ENCODE measurements at regions of chrX and their contacts with region 1.

Region 1: GRCh38 chrX:138128027-138128671 is 562.2 kb downstream of the ZIC3 start:
- DNase-seq: peak; percentile 20
- ATAC-seq: peak; percentile 17
- H3K4me3 ChIP-seq: no peak overlapping the region
- H3K4me3 Mint-ChIP-seq: no peak overlapping the region
- H3K27ac ChIP-seq: no peak overlapping the region
- H3K27ac Mint-ChIP-seq: no peak overlapping the region
- H3K4me1 ChIP-seq: no peaks in the 10 kb centered on the region
- H3K4me1 Mint-ChIP-seq: no peaks in the 10 kb centered on the region
- H3K27me3 ChIP-seq: no peaks in the 10 kb centered on the region
- H3K27me3 Mint-ChIP-seq: no peaks in the 10 kb centered on the region
- CTCF ChIP-seq: peak; percentile 61

Region 2: DNA sequence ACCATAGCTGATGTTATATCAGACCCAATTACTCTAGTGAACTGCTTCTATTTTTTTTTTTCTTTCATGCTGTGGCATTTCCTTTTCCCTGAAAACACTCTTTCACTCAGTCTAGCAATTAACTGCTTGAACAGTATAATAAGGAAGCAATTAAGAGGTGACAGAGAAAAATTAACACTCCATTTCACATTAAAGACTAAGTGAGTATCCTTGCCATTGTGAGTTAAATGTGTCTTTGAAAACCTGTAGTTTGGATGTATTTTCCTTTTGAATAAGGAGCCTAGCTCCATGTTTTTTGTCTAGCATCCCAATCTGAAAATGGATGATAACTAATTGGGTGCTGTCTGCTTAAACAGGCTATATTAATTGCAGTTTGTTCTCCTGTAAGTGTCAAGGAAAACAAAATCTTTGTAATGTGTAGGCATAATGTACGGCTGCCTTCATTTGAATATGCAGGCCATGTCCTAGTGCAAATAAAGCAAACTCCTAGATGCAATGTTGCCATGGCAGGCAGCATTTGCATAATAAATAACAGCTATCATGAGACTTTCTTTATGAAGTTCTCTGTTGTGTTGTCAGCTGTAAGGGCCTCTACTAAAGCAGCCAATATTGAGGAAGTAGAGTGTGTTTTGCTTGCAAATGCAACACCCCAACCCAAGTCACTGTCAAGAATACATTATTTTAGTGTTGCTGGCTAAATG is 145.5 kb before region 1 on chrX:
- CTCF ChIA-PET with region 1: no interaction called
- POLR2A ChIA-PET with region 1: no interaction called
- intact Hi-C with region 1: no loop called
- DNase-seq: no peak
- ATAC-seq: no peak
- H3K4me3 ChIP-seq: no peak overlapping the region
- H3K4me3 Mint-ChIP-seq: no peak overlapping the region
- H3K27ac ChIP-seq: no peak overlapping the region
- H3K27ac Mint-ChIP-seq: no peak overlapping the region
- H3K4me1 ChIP-seq: no peaks in the 10 kb centered on the region
- H3K4me1 Mint-ChIP-seq: no peaks in the 10 kb centered on the region
- H3K27me3 ChIP-seq: no peaks in the 10 kb centered on the region
- H3K27me3 Mint-ChIP-seq: no peaks in the 10 kb centered on the region
- CTCF ChIP-seq: no peak

Region 3: GRCh38 chrX:138745196-138745595 is 617.0 kb after region 1 on chrX:
- CTCF ChIA-PET with region 1: no interaction called
- POLR2A ChIA-PET with region 1: no interaction called
- intact Hi-C with region 1: loop called (anchors 5 kb)
- DNase-seq: peak; percentile 32
- ATAC-seq: no peak
- H3K4me3 ChIP-seq: no peak overlapping the region
- H3K4me3 Mint-ChIP-seq: no peak overlapping the region
- H3K27ac ChIP-seq: no peak overlapping the region
- H3K27ac Mint-ChIP-seq: no peak overlapping the region
- H3K4me1 ChIP-seq: no peaks in the 10 kb centered on the region
- H3K4me1 Mint-ChIP-seq: no peaks in the 10 kb centered on the region
- H3K27me3 ChIP-seq: no peaks in the 10 kb centered on the region
- H3K27me3 Mint-ChIP-seq: no peaks in the 10 kb centered on the region
- CTCF ChIP-seq: peak; percentile 61

Region 4: GRCh38 chrX:138939038-138939437 is 810.9 kb after region 1 on chrX:
- CTCF ChIA-PET with region 1: no interaction called
- POLR2A ChIA-PET with region 1: no interaction called
- intact Hi-C with region 1: no loop called
- DNase-seq: no peak
- ATAC-seq: no peak
- H3K4me3 ChIP-seq: no peak overlapping the region
- H3K4me3 Mint-ChIP-seq: no peak overlapping the region
- H3K27ac ChIP-seq: no peak overlapping the region
- H3K27ac Mint-ChIP-seq: no peak overlapping the region
- H3K4me1 ChIP-seq: no peaks in the 10 kb centered on the region
- H3K4me1 Mint-ChIP-seq: no peaks in the 10 kb centered on the region
- H3K27me3 ChIP-seq: no peaks in the 10 kb centered on the region
- H3K27me3 Mint-ChIP-seq: no peaks in the 10 kb centered on the region
- CTCF ChIP-seq: no peak